Posterior vena cava (tissue), 2 donors: ENCODE measurements at regions of chr12 and their contacts with region 1.

Region 1: GRCh38 chr12:42119085-42119633 is 25.5 kb downstream of the GXYLT1 start:
- DNase-seq: no peak

Region 2: GRCh38 chr12:42156232-42156631 is 37.1 kb after region 1 on chr12:
- intact Hi-C with region 1: loop called in 1 of 2 experiments (anchors 2 kb)
- DNase-seq: no peak